ENCODE measurements at regions of chr3 and their contacts with region 1.

Region 1: DNA sequence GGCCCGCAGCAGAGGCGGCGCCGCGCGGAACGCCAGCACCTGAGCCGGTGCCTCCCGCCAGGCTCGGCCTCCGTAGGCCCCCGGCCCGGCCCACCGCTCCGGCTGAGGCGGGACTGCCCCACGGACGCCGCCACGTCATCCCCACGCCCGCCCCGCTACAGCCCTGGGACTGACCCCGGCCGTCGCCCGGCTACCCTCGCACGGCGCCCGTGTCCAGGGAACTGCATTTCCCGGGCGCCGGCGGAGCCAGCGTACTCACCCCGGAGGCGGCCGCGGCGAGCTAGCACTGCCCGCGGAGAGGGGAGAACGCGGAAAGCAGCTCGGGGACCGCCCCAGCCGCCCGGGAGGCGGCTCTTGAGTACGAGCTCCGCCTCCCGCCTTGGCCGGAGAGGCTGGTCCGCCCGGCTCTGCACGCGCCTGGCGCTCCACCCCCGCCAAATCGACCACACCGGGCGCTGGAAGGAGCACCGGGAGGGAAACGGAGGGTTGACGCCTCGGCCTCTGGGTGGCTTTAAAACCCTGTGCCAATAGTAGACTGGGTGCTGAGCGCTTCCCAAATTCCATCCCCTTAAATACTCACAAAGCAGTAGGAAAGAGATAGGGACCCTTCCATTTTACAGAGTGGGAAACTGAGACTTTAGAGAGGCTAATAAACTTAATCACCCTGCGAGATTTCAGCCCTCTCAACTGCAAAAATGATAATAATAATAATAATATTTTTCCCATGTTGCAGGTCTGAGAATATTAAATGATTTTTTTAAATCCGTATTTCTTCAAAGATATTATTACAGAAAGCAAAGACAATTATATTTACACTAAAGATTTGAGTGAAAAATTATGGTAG is at the start of gene B4GALT4:
- DNase-seq: peak; percentile 57 to 74 (median 67)
- H3K4me3 ChIP-seq: peak within 1 kb of the TSS; percentile 42 to 66
- H3K4me3 Mint-ChIP-seq: peak within 1 kb of the TSS; percentile 76 to 95 (median 88)
- H3K27ac ChIP-seq: peak within 1 kb of the TSS; percentile 77
- H3K27ac Mint-ChIP-seq: peak within 1 kb of the TSS; percentile 69 to 97 (median 94)
- H3K4me1 ChIP-seq: peaks cover 50% of the 10 kb centered on the region
- H3K4me1 Mint-ChIP-seq: peaks cover 23 to 46% (median 31%) of the 10 kb centered on the region in 4 donors
- H3K27me3 ChIP-seq: no peaks in the 10 kb centered on the region
- H3K27me3 Mint-ChIP-seq: no peaks in the 10 kb centered on the region
- total RNA-seq, gene B4GALT4: 15.9 to 18.1 TPM

Region 2: GRCh38 chr3:119098619-119099222 is 142.1 kb before region 1 on chr3:
- CTCF ChIA-PET with region 1: no interaction called
- POLR2A ChIA-PET with region 1: no interaction called
- intact Hi-C with region 1: loop called (anchors 1 kb)
- DNase-seq: peak in 4 of 5 donors; percentile 35 to 58 (median 42)
- H3K4me3 ChIP-seq: no peak overlapping the region
- H3K4me3 Mint-ChIP-seq: no peak overlapping the region
- H3K27ac ChIP-seq: no peak overlapping the region
- H3K27ac Mint-ChIP-seq: no peak overlapping the region
- H3K4me1 ChIP-seq: no peaks in the 10 kb centered on the region
- H3K4me1 Mint-ChIP-seq: no peaks in the 10 kb centered on the region
- H3K27me3 ChIP-seq: no peaks in the 10 kb centered on the region
- H3K27me3 Mint-ChIP-seq: peaks cover 0 to 2% of the 10 kb centered on the region in 2 donors

Region 3: DNA sequence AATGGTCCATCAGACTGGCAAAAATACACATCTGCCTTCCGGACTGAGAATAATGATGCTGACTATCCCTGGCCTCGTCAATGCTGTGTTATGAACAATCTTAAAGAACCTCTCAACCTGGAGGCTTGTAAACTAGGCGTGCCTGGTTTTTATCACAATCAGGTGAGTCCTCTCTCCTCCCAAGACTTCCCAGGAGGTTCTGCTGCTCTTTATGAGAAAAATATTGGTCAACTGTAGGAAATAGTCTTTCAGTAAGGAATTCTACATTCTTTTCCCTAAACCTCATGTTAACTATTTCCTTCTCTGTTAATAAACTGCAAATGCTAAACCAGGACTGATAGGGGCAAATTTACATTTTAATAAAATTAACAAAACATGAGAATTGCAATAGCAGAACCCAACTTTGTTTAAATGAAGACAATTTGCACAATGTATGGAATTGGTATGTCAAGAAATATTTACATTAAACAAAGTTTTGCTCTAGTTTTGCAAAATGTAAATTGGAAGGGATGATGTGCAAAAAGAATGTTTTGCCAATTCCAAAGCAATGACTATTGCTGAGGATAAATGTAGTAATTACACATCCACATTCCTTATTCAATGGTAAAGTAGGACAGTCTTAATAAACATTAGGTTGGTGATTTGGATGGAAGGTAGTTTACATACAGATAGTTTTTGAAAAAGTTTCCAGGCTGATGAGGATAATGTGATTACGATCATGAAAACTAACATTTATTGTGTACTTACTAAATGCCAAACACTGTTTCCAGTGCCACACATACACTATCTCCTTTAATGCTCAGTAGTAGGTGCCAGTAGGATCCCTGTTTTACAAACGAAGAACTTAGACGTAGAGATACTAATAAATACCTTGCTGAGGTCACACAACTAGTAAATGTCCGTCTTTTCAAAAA is 46.3 kb before region 1 on chr3:
- CTCF ChIA-PET with region 1: no interaction called
- POLR2A ChIA-PET with region 1: no interaction called
- intact Hi-C with region 1: no loop called
- DNase-seq: no peak
- H3K4me3 ChIP-seq: no peak overlapping the region
- H3K4me3 Mint-ChIP-seq: no peak overlapping the region
- H3K27ac ChIP-seq: no peak overlapping the region
- H3K27ac Mint-ChIP-seq: no peak overlapping the region
- H3K4me1 ChIP-seq: no peaks in the 10 kb centered on the region
- H3K4me1 Mint-ChIP-seq: no peaks in the 10 kb centered on the region
- H3K27me3 ChIP-seq: no peaks in the 10 kb centered on the region
- H3K27me3 Mint-ChIP-seq: peaks cover 0 to 3% of the 10 kb centered on the region in 2 donors

Region 4: GRCh38 chr3:119227070-119227850 is 13.6 kb before region 1 on chr3:
- CTCF ChIA-PET with region 1: interaction called, 21 read pairs
- POLR2A ChIA-PET with region 1: interaction called, 5 read pairs
- intact Hi-C with region 1: no loop called
- DNase-seq: no peak
- H3K4me3 ChIP-seq: no peak overlapping the region
- H3K4me3 Mint-ChIP-seq: no peak overlapping the region
- H3K27ac ChIP-seq: no peak overlapping the region
- H3K27ac Mint-ChIP-seq: peak overlapping the region in 2 of 7 donors; percentile 6 to 72
- H3K4me1 ChIP-seq: no peaks in the 10 kb centered on the region
- H3K4me1 Mint-ChIP-seq: peaks cover 8 to 19% (median 15%) of the 10 kb centered on the region in 4 donors
- H3K27me3 ChIP-seq: no peaks in the 10 kb centered on the region
- H3K27me3 Mint-ChIP-seq: no peaks in the 10 kb centered on the region

Region 5: GRCh38 chr3:119322835-119323722 is 82.3 kb after region 1 on chr3:
- CTCF ChIA-PET with region 1: interaction called, 4 read pairs
- POLR2A ChIA-PET with region 1: interaction called, 9 read pairs
- intact Hi-C with region 1: loop called (anchors 1 kb)
- DNase-seq: peak; percentile 87 to 95 (median 89)
- H3K4me3 ChIP-seq: peak overlapping the region; percentile 20 to 73
- H3K4me3 Mint-ChIP-seq: peak overlapping the region; percentile 88 to 96 (median 90)
- H3K27ac ChIP-seq: peak overlapping the region; percentile 75
- H3K27ac Mint-ChIP-seq: peak overlapping the region; percentile 93 to 99 (median 97)
- H3K4me1 ChIP-seq: peaks cover 19% of the 10 kb centered on the region
- H3K4me1 Mint-ChIP-seq: peaks cover 13 to 38% (median 27%) of the 10 kb centered on the region in 4 donors
- H3K27me3 ChIP-seq: no peaks in the 10 kb centered on the region
- H3K27me3 Mint-ChIP-seq: no peaks in the 10 kb centered on the region

Region 6: GRCh38 chr3:119498186-119498987 is 257.6 kb after region 1 on chr3 and contains the start of gene TIMMDC1:
- CTCF ChIA-PET with region 1: no interaction called
- POLR2A ChIA-PET with region 1: interaction called, 3 read pairs
- intact Hi-C with region 1: loop called (anchors 1 kb)
- DNase-seq: peak; percentile 96 to 98 (median 97)
- H3K4me3 ChIP-seq: peak within 1 kb of the TSS; percentile 82 to 93
- H3K4me3 Mint-ChIP-seq: peak within 1 kb of the TSS; percentile 98 to 100 (median 99)
- H3K27ac ChIP-seq: peak within 1 kb of the TSS; percentile 92
- H3K27ac Mint-ChIP-seq: peak within 1 kb of the TSS; percentile 99 to 100 (median 100)
- H3K4me1 ChIP-seq: peaks cover 31% of the 10 kb centered on the region
- H3K4me1 Mint-ChIP-seq: peaks cover 13 to 42% (median 33%) of the 10 kb centered on the region in 4 donors
- H3K27me3 ChIP-seq: no peaks in the 10 kb centered on the region
- H3K27me3 Mint-ChIP-seq: no peaks in the 10 kb centered on the region
- total RNA-seq, gene TIMMDC1: 72.3 to 80.9 TPM

Region 7: GRCh38 chr3:119774444-119774843 is 533.6 kb after region 1 on chr3:
- CTCF ChIA-PET with region 1: no interaction called
- POLR2A ChIA-PET with region 1: no interaction called
- intact Hi-C with region 1: no loop called
- DNase-seq: no peak
- H3K4me3 ChIP-seq: no peak overlapping the region
- H3K4me3 Mint-ChIP-seq: no peak overlapping the region
- H3K27ac ChIP-seq: no peak overlapping the region
- H3K27ac Mint-ChIP-seq: no peak overlapping the region
- H3K4me1 ChIP-seq: no peaks in the 10 kb centered on the region
- H3K4me1 Mint-ChIP-seq: peaks cover 0 to 1% (median 0%) of the 10 kb centered on the region in 4 donors
- H3K27me3 ChIP-seq: no peaks in the 10 kb centered on the region
- H3K27me3 Mint-ChIP-seq: peaks cover 1 to 3% of the 10 kb centered on the region in 2 donors

Measured in CD4-positive, alpha-beta memory T cell (primary cell).